ENCODE measurements at regions of chr9 and their contacts with region 1.

Region 1: DNA sequence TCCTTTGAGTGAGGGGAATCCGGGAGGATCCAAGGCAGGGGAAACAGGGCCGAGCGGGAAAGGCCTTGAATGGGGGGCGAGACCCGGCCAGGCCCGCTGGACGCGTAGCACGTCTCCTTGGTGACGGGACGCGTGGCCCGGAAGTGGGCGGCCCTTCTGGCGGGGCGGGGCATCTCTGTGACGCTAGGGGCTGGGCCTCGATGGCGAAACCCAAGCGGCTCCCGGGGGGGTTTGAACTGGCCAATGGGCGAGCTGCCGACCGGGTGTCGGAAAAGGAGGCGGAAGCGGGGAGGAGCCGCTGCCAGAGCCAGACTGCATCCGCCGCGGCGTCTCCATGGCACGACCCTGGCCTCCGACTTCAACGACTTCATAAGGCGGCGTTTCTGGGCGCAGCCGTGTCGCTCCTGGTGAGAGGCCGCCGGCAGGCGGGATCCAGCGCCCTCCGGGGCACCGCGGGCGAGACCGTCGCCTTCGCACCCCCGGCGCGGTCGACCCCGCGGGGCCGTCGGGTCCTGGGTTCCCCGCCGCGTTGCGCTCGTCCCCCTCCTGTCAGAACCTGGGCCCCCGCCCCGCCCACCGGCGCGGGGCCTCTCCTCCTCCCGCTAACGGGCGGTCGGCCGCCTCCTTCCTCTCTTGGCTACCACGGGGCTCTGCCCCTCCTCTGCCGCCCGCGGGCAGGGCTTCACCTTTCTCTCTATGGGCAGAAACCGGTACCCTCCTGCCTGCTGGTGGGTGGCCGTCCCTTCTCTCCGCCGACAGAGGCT is at the start of gene ODF2:
- DNase-seq: peak; percentile 96 to 99 (median 99)
- ATAC-seq: peak; percentile 90
- H3K4me3 ChIP-seq: peak within 1 kb of the TSS; percentile 74 to 87
- H3K4me3 Mint-ChIP-seq: peak within 1 kb of the TSS; percentile 89
- H3K27ac ChIP-seq: peak within 1 kb of the TSS; percentile 87
- H3K27ac Mint-ChIP-seq: peak within 1 kb of the TSS; percentile 91
- H3K4me1 ChIP-seq: peaks cover 8% of the 10 kb centered on the region
- H3K4me1 Mint-ChIP-seq: peaks cover 22% of the 10 kb centered on the region
- H3K27me3 ChIP-seq: no peaks in the 10 kb centered on the region
- H3K27me3 Mint-ChIP-seq: no peaks in the 10 kb centered on the region
- CTCF ChIP-seq: no peak
- total RNA-seq, gene ODF2: 15.0 to 17.2 TPM

Region 2: GRCh38 chr9:127612939-127613582 is 843.0 kb before region 1 on chr9:
- CTCF ChIA-PET with region 1: no interaction called
- POLR2A ChIA-PET with region 1: no interaction called
- intact Hi-C with region 1: no loop called
- DNase-seq: peak; percentile 8 to 72 (median 41)
- ATAC-seq: peak; percentile 7
- H3K4me3 ChIP-seq: peak overlapping the region; percentile 55 to 82
- H3K4me3 Mint-ChIP-seq: peak overlapping the region; percentile 91
- H3K27ac ChIP-seq: peak overlapping the region in 1 of 2 experiments; percentile 42
- H3K27ac Mint-ChIP-seq: peak overlapping the region; percentile 80
- H3K4me1 ChIP-seq: peaks cover 25% of the 10 kb centered on the region
- H3K4me1 Mint-ChIP-seq: peaks cover 29% of the 10 kb centered on the region
- H3K27me3 ChIP-seq: peaks cover 4 to 9% of the 10 kb centered on the region in 2 experiments
- H3K27me3 Mint-ChIP-seq: peaks cover 9% of the 10 kb centered on the region
- CTCF ChIP-seq: no peak

Region 3: DNA sequence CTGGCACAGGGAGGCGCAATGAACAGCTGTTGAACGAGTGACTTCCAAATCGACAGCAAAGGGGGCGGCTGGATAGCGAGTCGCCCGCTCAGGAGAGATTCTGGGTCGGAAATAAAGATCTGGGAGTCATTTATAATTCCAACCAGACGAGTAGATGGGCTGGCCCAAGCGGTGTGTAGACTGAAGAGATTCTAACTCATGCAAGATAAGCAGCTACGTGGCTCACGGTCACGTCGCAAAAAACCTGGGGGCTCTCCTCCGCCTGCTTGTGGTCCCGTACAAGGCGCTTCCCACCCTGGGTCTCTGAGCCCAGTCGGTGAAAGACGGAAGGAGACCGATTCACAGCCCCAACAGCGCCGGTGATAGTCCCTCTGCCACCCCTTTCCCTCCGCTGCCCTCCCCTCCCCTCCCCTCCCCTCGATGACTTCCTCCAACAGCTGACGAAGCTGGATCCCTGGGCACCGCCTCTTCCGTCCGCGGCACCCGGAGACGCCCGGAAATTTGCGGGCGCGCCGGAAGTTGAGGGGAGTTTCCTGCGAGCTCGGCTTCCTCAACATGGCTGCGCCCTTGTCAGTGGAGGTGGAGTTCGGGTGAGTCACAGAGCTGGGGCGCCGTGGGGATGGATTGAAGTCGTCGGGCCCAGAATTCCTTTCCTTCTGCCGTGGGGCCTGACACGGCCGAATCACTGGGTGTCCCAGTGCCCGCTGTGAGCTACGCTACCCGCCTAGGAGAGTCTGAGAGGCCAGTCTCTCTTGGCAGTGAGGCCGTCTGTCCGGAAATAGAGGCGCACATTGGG is 85.0 kb before region 1 on chr9 and contains the start of gene URM1:
- CTCF ChIA-PET with region 1: interaction called, 3 read pairs
- POLR2A ChIA-PET with region 1: no interaction called
- intact Hi-C with region 1: loop called (anchors 1 kb)
- DNase-seq: peak; percentile 91 to 98 (median 96)
- ATAC-seq: peak; percentile 90
- H3K4me3 ChIP-seq: peak within 1 kb of the TSS; percentile 84 to 95
- H3K4me3 Mint-ChIP-seq: peak within 1 kb of the TSS; percentile 97
- H3K27ac ChIP-seq: peak within 1 kb of the TSS; percentile 76 to 96
- H3K27ac Mint-ChIP-seq: peak within 1 kb of the TSS; percentile 98
- H3K4me1 ChIP-seq: peaks cover 16% of the 10 kb centered on the region
- H3K4me1 Mint-ChIP-seq: peaks cover 43% of the 10 kb centered on the region
- H3K27me3 ChIP-seq: no peaks in the 10 kb centered on the region
- H3K27me3 Mint-ChIP-seq: no peaks in the 10 kb centered on the region
- CTCF ChIP-seq: no peak
- total RNA-seq, gene URM1: 30.4 to 31.5 TPM

Region 4: GRCh38 chr9:128504485-128505413 is 48.7 kb after region 1 on chr9 and contains the start of gene GLE1:
- CTCF ChIA-PET with region 1: no interaction called
- POLR2A ChIA-PET with region 1: interaction called, 4 read pairs
- intact Hi-C with region 1: loop called (anchors 1 kb)
- DNase-seq: peak; percentile 93 to 99 (median 97)
- ATAC-seq: peak; percentile 95
- H3K4me3 ChIP-seq: peak within 1 kb of the TSS; percentile 80 to 96
- H3K4me3 Mint-ChIP-seq: peak within 1 kb of the TSS; percentile 99
- H3K27ac ChIP-seq: peak within 1 kb of the TSS; percentile 84 to 90
- H3K27ac Mint-ChIP-seq: peak within 1 kb of the TSS; percentile 99
- H3K4me1 ChIP-seq: peaks cover 18% of the 10 kb centered on the region
- H3K4me1 Mint-ChIP-seq: peaks cover 38% of the 10 kb centered on the region
- H3K27me3 ChIP-seq: no peaks in the 10 kb centered on the region
- H3K27me3 Mint-ChIP-seq: no peaks in the 10 kb centered on the region
- CTCF ChIP-seq: no peak
- total RNA-seq, gene GLE1: 6.6 to 8.5 TPM

Region 5: GRCh38 chr9:128723866-128724743 is 268.1 kb after region 1 on chr9 and contains the start of gene ZDHHC12:
- CTCF ChIA-PET with region 1: no interaction called
- POLR2A ChIA-PET with region 1: no interaction called
- intact Hi-C with region 1: loop called in 1 of 2 experiments (anchors 10 kb)
- DNase-seq: peak; percentile 97 to 100 (median 99)
- ATAC-seq: peak; percentile 97
- H3K4me3 ChIP-seq: peak within 1 kb of the TSS; percentile 74 to 84
- H3K4me3 Mint-ChIP-seq: peak within 1 kb of the TSS; percentile 89
- H3K27ac ChIP-seq: peak within 1 kb of the TSS; percentile 69 to 79
- H3K27ac Mint-ChIP-seq: peak within 1 kb of the TSS; percentile 92
- H3K4me1 ChIP-seq: peaks cover 37% of the 10 kb centered on the region
- H3K4me1 Mint-ChIP-seq: peaks cover 29% of the 10 kb centered on the region
- H3K27me3 ChIP-seq: no peaks in the 10 kb centered on the region
- H3K27me3 Mint-ChIP-seq: no peaks in the 10 kb centered on the region
- CTCF ChIP-seq: no peak
- total RNA-seq, gene ZDHHC12: 25.5 to 29.6 TPM

Region 6: GRCh38 chr9:128829477-128830251 is 373.6 kb after region 1 on chr9 and contains the start of gene SPOUT1:
- CTCF ChIA-PET with region 1: no interaction called
- POLR2A ChIA-PET with region 1: no interaction called
- intact Hi-C with region 1: loop called in 1 of 2 experiments (anchors 2 kb)
- DNase-seq: peak; percentile 88 to 96 (median 92)
- ATAC-seq: peak; percentile 99
- H3K4me3 ChIP-seq: peak within 1 kb of the TSS; percentile 89 to 99
- H3K4me3 Mint-ChIP-seq: peak within 1 kb of the TSS; percentile 96
- H3K27ac ChIP-seq: peak within 1 kb of the TSS; percentile 73 to 83
- H3K27ac Mint-ChIP-seq: peak within 1 kb of the TSS; percentile 94
- H3K4me1 ChIP-seq: peaks cover 18% of the 10 kb centered on the region
- H3K4me1 Mint-ChIP-seq: peaks cover 20% of the 10 kb centered on the region
- H3K27me3 ChIP-seq: no peaks in the 10 kb centered on the region
- H3K27me3 Mint-ChIP-seq: no peaks in the 10 kb centered on the region
- CTCF ChIP-seq: no peak
- total RNA-seq, gene SPOUT1: 25.0 to 25.2 TPM